Sigmoid colon (tissue), 7 donors: ENCODE measurements at regions of chr5 and their contacts with region 1.

Region 1: DNA sequence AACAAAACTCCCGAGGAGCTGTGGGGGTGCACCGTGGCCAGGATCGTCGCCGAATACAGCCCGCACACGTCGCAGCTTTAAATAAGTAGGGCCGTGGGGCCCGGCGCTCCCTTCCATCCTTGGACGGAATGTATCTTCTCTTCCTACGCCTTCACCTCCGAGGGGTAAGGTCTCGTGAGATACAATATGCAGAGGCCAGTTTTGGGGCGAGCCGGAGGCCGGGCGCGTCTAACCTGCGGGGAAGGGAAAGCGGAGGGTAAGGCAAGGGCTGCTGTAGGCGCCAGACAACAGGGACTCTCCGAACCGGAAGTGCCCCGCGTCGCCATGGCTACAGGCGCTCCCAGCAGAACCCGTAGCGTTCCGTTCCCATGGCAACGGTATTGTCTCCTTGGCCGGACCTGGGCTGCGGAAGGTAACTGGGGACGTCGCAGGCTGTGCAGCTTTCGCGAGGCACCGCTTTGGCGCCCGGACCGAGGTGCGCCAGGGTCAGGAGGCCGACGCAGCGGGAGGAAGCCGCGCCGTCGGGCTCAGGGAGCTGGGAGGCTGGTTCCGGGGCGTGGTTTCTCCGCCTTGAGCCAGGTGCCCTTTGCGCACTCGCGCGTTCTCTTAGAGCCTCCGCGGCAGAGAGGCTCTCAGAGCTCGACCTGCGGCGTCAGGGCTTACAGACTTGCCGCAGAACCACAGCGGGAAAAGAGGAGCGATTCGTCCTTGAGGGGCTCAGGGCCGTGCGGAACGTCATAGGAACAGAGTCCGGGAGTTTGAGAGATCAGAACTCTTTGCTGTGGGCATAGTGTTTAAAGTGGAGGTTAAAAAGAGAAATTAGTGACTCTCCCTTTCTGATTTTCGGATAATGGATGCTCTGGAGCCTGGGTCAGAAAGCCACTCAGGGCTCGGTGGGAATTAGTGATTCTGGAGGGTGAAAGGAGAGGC is at the start of gene TTC23L:
- DNase-seq: peak; percentile 93
- H3K4me3 ChIP-seq: peak within 1 kb of the TSS; percentile 53 to 89 (median 76)
- H3K27ac ChIP-seq: peak within 1 kb of the TSS; percentile 66 to 73 (median 70)
- H3K4me1 ChIP-seq: peaks cover 0 to 11% (median 0%) of the 10 kb centered on the region in 4 donors
- H3K27me3 ChIP-seq: no peaks in the 10 kb centered on the region
- CTCF ChIP-seq: no peak
- EP300 ChIP-seq: no peak
- POLR2A ChIP-seq: peak in 1 of 2 donors; percentile 44
- total RNA-seq, gene TTC23L: 0.16 to 0.36 (median 0.28) TPM in 3 of 4 donors, not detected in the other

Region 2: GRCh38 chr5:34522599-34523386 is 316.3 kb before region 1 on chr5:
- intact Hi-C with region 1: loop called (anchors 2 kb)
- DNase-seq: peak; percentile 88
- H3K4me3 ChIP-seq: no peak overlapping the region
- H3K27ac ChIP-seq: peak overlapping the region; percentile 10 to 80 (median 68)
- H3K4me1 ChIP-seq: peaks cover 0 to 28% (median 23%) of the 10 kb centered on the region in 4 donors
- H3K27me3 ChIP-seq: no peaks in the 10 kb centered on the region
- CTCF ChIP-seq: peak; percentile 36 to 72 (median 70)
- EP300 ChIP-seq: no peak
- POLR2A ChIP-seq: no peak